Ascending aorta (tissue), 2 donors: ENCODE measurements at regions of chr13 and their contacts with region 1.

Region 1: DNA sequence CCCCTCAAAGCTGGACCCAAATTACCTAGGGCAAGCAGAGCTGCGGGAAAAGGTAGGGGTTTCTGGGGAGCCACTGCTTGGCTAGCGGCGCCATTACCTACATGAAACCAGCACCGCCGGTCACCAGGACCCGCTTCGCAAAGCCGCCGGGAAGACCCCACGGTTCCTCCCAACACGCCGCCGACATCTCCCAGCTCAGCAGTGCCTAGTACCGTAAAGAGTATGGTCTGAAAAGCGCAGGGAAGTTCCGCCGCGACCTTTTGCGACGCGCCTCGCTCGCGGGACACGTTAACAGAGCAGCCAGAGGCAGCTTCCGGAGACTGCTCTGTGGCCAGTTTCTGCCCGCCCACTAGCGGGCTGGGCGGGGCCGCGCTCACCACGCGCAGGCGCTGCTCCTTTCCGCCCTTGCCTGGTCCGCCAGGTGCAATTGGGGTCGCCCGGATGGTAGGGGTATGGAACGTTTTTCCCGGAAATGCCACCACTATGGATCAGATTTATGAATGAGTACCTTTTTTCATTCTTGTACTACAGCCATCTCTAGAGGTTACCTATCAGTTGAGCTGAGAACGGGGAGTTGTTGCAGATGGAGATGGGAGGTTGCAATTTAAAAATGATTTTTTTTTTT is at the start of gene TGDS:
- DNase-seq: peak; percentile 68 to 96
- H3K4me3 ChIP-seq: peak within 1 kb of the TSS; percentile 91 to 95
- H3K27ac ChIP-seq: peak within 1 kb of the TSS; percentile 65 to 67
- H3K4me1 ChIP-seq: peaks cover 6 to 14% of the 10 kb centered on the region in 2 donors
- H3K27me3 ChIP-seq: no peaks in the 10 kb centered on the region
- CTCF ChIP-seq: no peak
- total RNA-seq, gene TGDS: 22.6 TPM

Region 2: DNA sequence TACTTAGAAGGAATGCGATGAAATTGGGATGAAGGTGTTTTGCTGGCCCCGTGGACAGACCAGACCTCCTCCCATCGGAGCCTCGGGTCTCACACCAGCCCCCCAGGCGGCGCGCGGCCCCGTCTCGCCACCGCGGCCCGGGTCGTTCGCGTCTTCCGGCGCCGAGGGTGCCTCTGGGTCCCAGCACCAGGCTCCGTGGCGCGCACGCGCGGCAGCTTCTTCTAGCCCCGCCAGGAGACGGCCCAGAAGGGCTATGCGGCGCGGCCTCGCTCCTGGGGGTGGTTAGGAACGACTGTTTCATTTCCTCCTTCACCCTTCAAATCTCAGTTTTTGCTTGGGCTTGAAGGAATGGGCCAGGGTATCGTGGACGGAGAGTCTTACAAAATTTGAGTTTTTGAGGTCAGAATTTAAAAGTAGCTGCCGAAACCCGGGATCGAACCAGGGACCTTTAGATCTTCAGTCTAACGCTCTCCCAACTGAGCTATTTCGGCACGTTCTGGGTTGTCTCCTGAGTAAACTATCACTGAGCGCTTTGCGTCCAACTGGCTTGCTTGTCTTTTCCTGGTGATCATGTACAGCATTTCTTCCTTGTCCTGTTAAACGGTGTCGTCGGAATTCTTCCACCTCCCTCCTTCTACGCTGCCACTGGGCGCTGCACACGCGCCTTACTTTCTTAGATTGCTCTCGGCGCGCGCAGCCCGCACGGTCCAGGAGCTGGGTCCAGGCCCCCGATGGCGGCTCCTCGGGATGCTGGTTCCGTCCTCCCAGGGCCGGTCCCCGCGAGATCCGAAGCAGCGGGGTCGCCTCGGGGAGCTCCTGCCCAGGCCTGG is 46.6 kb before region 1 on chr13:
- intact Hi-C with region 1: loop called (anchors 1 kb)
- DNase-seq: peak; percentile 68 to 96
- H3K4me3 ChIP-seq: peak overlapping the region; percentile 72 to 84
- H3K27ac ChIP-seq: peak overlapping the region; percentile 96 to 99
- H3K4me1 ChIP-seq: peaks cover 2 to 5% of the 10 kb centered on the region in 2 donors
- H3K27me3 ChIP-seq: no peaks in the 10 kb centered on the region
- CTCF ChIP-seq: peak in 1 of 3 experiments; percentile 12